ENCODE measurements at regions of chr5 and their contacts with region 1.

Region 1: DNA sequence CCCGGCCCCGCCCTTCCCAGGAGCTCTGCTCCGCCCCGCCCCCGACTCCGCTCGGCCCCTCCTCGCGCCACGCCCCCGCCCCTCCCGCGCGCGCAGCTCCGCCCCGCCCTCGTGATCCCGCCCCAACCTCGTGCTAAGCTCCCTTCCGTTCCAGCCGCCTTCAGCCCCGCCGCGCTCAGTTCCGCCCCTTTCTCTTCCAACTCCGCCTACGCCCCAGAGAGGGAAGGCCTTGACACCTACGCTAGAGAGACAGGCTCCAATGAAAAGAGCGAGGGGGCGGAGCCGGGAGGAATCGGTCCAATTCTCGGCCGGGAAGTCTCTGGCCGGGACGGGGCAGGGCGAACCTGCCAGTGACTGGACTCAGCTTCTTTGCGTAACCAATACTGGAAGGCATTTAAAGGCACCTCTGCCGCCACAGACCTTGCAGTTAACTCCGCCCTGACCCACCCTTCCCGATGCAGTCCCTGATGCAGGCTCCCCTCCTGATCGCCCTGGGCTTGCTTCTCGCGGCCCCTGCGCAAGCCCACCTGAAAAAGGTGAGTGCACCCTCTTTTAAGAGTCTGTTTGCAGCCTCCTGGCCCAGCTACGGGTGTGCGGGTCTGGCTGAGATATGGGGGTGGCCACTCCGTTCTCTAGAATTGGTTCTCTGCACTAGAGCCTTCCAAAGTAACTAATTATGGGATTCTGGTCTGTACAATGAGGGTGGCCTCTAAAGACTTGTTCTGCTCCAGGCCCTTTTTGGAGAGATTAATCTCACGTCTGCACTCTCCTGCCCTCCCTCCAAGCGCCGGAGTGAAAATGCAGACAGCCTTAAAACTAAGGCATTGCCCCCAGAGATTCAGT is at the start of gene GM2A:
- DNase-seq: peak; percentile 91 to 98 (median 96)
- ATAC-seq: peak; percentile 97
- H3K4me3 ChIP-seq: peak within 1 kb of the TSS; percentile 93
- H3K4me3 Mint-ChIP-seq: peak within 1 kb of the TSS; percentile 82 to 97 (median 94)
- H3K27ac ChIP-seq: peak within 1 kb of the TSS; percentile 78
- H3K27ac Mint-ChIP-seq: peak within 1 kb of the TSS; percentile 74 to 96 (median 95)
- H3K4me1 ChIP-seq: peaks cover 11 to 21% of the 10 kb centered on the region in 2 donors
- H3K4me1 Mint-ChIP-seq: peaks cover 30 to 50% (median 47%) of the 10 kb centered on the region in 7 donors
- H3K27me3 ChIP-seq: no peaks in the 10 kb centered on the region
- H3K27me3 Mint-ChIP-seq: no peaks in the 10 kb centered on the region
- total RNA-seq, gene GM2A: 11.1 to 45.6 (median 16.9) TPM

Region 2: GRCh38 chr5:149960272-149961185 is 1292.5 kb before region 1 on chr5 and contains the start of gene SLC26A2:
- CTCF ChIA-PET with region 1: no interaction called
- POLR2A ChIA-PET with region 1: interaction called, 5 read pairs
- intact Hi-C with region 1: loop called in 1 of 2 experiments (anchors 2 kb)
- DNase-seq: peak; percentile 78 to 92 (median 91)
- ATAC-seq: peak; percentile 99
- H3K4me3 ChIP-seq: peak within 1 kb of the TSS; percentile 98
- H3K4me3 Mint-ChIP-seq: peak within 1 kb of the TSS; percentile 90 to 100 (median 96)
- H3K27ac ChIP-seq: peak within 1 kb of the TSS; percentile 77
- H3K27ac Mint-ChIP-seq: peak within 1 kb of the TSS; percentile 94 to 98 (median 97)
- H3K4me1 ChIP-seq: peaks cover 16 to 28% of the 10 kb centered on the region in 2 donors
- H3K4me1 Mint-ChIP-seq: peaks cover 14 to 43% (median 37%) of the 10 kb centered on the region in 7 donors
- H3K27me3 ChIP-seq: no peaks in the 10 kb centered on the region
- H3K27me3 Mint-ChIP-seq: no peaks in the 10 kb centered on the region
- total RNA-seq, gene SLC26A2: 5.2 to 16.5 (median 9.6) TPM

Region 3: GRCh38 chr5:150409638-150410523 is 843.1 kb before region 1 on chr5:
- CTCF ChIA-PET with region 1: no interaction called
- POLR2A ChIA-PET with region 1: no interaction called
- intact Hi-C with region 1: loop called in 1 of 2 experiments (anchors 2 kb)
- DNase-seq: peak in 7 of 9 donors; percentile 27 to 48 (median 43)
- ATAC-seq: no peak
- H3K4me3 ChIP-seq: peak overlapping the region; percentile 83
- H3K4me3 Mint-ChIP-seq: peak overlapping the region; percentile 91 to 100 (median 98)
- H3K27ac ChIP-seq: peak overlapping the region; percentile 98
- H3K27ac Mint-ChIP-seq: peak overlapping the region; percentile 96 to 100 (median 100)
- H3K4me1 ChIP-seq: peaks cover 32 to 35% of the 10 kb centered on the region in 2 donors
- H3K4me1 Mint-ChIP-seq: peaks cover 24 to 52% (median 38%) of the 10 kb centered on the region in 7 donors
- H3K27me3 ChIP-seq: no peaks in the 10 kb centered on the region
- H3K27me3 Mint-ChIP-seq: no peaks in the 10 kb centered on the region

Region 4: DNA sequence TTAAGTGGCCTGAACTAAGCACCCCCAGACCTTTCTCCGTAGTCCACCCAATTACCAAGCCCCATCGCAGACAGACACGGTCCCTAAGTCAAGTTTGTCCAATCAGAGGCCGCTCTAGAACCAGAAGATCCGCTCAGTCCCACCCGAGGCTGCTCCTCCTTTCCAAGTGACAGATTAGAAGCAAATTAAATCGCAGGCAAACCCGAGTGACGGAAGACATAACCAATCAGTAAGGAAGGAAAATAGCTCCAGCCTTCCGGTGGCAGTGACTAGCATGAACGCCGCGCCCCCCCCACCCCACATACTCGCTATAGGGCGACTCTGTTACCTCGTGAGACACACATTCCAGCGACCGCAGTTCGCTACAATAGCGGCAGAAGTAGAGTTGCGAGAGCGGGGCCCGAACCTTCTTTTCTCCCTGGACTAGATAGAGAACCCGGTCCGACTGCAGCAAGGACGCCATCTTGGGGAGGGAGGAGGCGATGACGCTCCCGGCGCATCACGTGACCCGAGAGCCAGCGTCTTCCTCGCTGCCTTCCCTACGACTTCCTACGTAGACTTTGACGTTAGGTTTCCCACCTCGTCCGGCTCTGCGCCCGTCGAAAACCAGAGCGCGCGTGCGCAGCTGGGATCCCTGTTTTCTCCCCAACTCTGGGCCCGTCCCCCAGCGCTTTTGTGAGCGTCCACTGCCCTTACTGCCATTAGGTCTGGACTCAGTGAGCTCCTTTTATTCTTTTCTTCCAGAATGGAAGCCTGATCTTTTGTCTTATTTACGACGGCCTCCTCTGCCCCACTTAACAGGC is 494.3 kb before region 1 on chr5 and contains the start of gene DCTN4:
- CTCF ChIA-PET with region 1: no interaction called
- POLR2A ChIA-PET with region 1: no interaction called
- intact Hi-C with region 1: loop called (anchors 1 to 2 kb)
- DNase-seq: peak; percentile 84 to 96 (median 94)
- ATAC-seq: peak; percentile 95
- H3K4me3 ChIP-seq: peak within 1 kb of the TSS; percentile 86
- H3K4me3 Mint-ChIP-seq: peak within 1 kb of the TSS in 3 of 10 donors; percentile 23 to 46 (median 36)
- H3K27ac ChIP-seq: peak within 1 kb of the TSS; percentile 96
- H3K27ac Mint-ChIP-seq: peak within 1 kb of the TSS in 1 of 9 donors; percentile 62
- H3K4me1 ChIP-seq: peaks cover 5 to 16% of the 10 kb centered on the region in 2 donors
- H3K4me1 Mint-ChIP-seq: peaks cover 22 to 54% (median 36%) of the 10 kb centered on the region in 7 donors
- H3K27me3 ChIP-seq: no peaks in the 10 kb centered on the region
- H3K27me3 Mint-ChIP-seq: peaks cover 0 to 5% (median 0%) of the 10 kb centered on the region in 5 donors
- total RNA-seq, gene DCTN4: 42.4 to 88.2 (median 46.9) TPM

Region 5: DNA sequence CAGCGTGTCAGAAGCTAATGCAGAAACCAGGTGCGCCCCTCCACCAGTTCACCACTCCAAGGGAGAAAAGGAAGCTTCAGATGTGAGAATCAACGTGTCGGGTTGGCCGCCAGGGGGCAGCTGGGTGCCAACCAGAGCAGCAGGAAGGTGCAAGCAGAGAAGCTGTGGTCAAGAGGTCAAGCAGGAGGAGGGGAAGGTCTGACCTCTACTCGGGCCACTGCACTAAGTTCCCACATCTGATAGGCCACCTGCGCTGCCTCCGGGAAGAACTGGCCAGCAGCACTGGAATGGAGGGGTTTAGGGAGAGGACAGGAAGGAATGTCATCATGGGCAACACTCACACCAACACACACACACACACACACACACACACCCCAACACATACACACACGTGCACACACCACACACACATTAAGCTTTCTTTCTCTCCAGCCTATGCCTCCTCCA is 126.8 kb before region 1 on chr5:
- CTCF ChIA-PET with region 1: interaction called, 5 read pairs
- POLR2A ChIA-PET with region 1: interaction called, 6 read pairs
- intact Hi-C with region 1: loop called in 1 of 2 experiments (anchors 1 kb)
- DNase-seq: peak; percentile 41 to 71 (median 64)
- ATAC-seq: peak; percentile 73
- H3K4me3 ChIP-seq: no peak overlapping the region
- H3K4me3 Mint-ChIP-seq: peak overlapping the region in 9 of 10 donors; percentile 22 to 84 (median 54)
- H3K27ac ChIP-seq: peak overlapping the region; percentile 72
- H3K27ac Mint-ChIP-seq: peak overlapping the region; percentile 68 to 99 (median 91)
- H3K4me1 ChIP-seq: peaks cover under 1 to 27% of the 10 kb centered on the region in 2 donors
- H3K4me1 Mint-ChIP-seq: peaks cover 32 to 75% (median 57%) of the 10 kb centered on the region in 7 donors
- H3K27me3 ChIP-seq: no peaks in the 10 kb centered on the region
- H3K27me3 Mint-ChIP-seq: no peaks in the 10 kb centered on the region

Region 6: GRCh38 chr5:151213800-151214613 is 39.0 kb before region 1 on chr5:
- CTCF ChIA-PET with region 1: no interaction called
- POLR2A ChIA-PET with region 1: interaction called, 29 read pairs
- intact Hi-C with region 1: loop called (anchors 1 kb)
- DNase-seq: peak; percentile 53 to 85 (median 79)
- ATAC-seq: peak; percentile 90
- H3K4me3 ChIP-seq: peak overlapping the region; percentile 74
- H3K4me3 Mint-ChIP-seq: peak overlapping the region; percentile 80 to 93 (median 89)
- H3K27ac ChIP-seq: peak overlapping the region; percentile 93
- H3K27ac Mint-ChIP-seq: peak overlapping the region; percentile 90 to 98 (median 97)
- H3K4me1 ChIP-seq: peaks cover 80 to 82% of the 10 kb centered on the region in 2 donors
- H3K4me1 Mint-ChIP-seq: peaks cover 56 to 95% (median 84%) of the 10 kb centered on the region in 7 donors
- H3K27me3 ChIP-seq: no peaks in the 10 kb centered on the region
- H3K27me3 Mint-ChIP-seq: no peaks in the 10 kb centered on the region

Region 7: GRCh38 chr5:151447174-151448037 is 194.4 kb after region 1 on chr5 and contains the start of gene SLC36A1:
- CTCF ChIA-PET with region 1: no interaction called
- POLR2A ChIA-PET with region 1: no interaction called
- intact Hi-C with region 1: loop called in 1 of 2 experiments (anchors 2 kb)
- DNase-seq: peak; percentile 77 to 99 (median 85)
- ATAC-seq: peak; percentile 100
- H3K4me3 ChIP-seq: peak within 1 kb of the TSS; percentile 77
- H3K4me3 Mint-ChIP-seq: peak within 1 kb of the TSS; percentile 82 to 98 (median 94)
- H3K27ac ChIP-seq: peak within 1 kb of the TSS; percentile 70
- H3K27ac Mint-ChIP-seq: peak within 1 kb of the TSS; percentile 43 to 95 (median 90)
- H3K4me1 ChIP-seq: peaks cover 6 to 15% of the 10 kb centered on the region in 2 donors
- H3K4me1 Mint-ChIP-seq: peaks cover 18 to 22% (median 19%) of the 10 kb centered on the region in 7 donors
- H3K27me3 ChIP-seq: peaks cover 0 to 3% of the 10 kb centered on the region in 2 donors
- H3K27me3 Mint-ChIP-seq: peaks cover 7 to 45% (median 14%) of the 10 kb centered on the region in 5 donors
- total RNA-seq, gene SLC36A1: 4.6 to 16.6 (median 7.1) TPM

Measured in naive thymus-derived CD4-positive, alpha-beta T cell (primary cell).